ENCODE measurements at regions of chr1 and their contacts with region 1.

Region 1: GRCh38 chr1:160451119-160451858 is 50.9 kb downstream of the VANGL2 start:
- DNase-seq: no peak
- ATAC-seq: no peak
- H3K4me3 ChIP-seq: no peak overlapping the region
- H3K27ac ChIP-seq: no peak overlapping the region
- H3K4me1 ChIP-seq: no peaks in the 10 kb centered on the region
- H3K27me3 ChIP-seq: peaks cover 73% of the 10 kb centered on the region
- CTCF ChIP-seq: no peak

Region 2: GRCh38 chr1:159030877-159031447 is 1420.3 kb before region 1 on chr1:
- CTCF ChIA-PET with region 1: interaction called, 10 read pairs
- POLR2A ChIA-PET with region 1: no interaction called
- intact Hi-C with region 1: no loop called
- DNase-seq: no peak
- ATAC-seq: no peak
- H3K4me3 ChIP-seq: no peak overlapping the region
- H3K27ac ChIP-seq: no peak overlapping the region
- H3K4me1 ChIP-seq: no peaks in the 10 kb centered on the region
- H3K27me3 ChIP-seq: no peaks in the 10 kb centered on the region
- CTCF ChIP-seq: no peak

Region 3: DNA sequence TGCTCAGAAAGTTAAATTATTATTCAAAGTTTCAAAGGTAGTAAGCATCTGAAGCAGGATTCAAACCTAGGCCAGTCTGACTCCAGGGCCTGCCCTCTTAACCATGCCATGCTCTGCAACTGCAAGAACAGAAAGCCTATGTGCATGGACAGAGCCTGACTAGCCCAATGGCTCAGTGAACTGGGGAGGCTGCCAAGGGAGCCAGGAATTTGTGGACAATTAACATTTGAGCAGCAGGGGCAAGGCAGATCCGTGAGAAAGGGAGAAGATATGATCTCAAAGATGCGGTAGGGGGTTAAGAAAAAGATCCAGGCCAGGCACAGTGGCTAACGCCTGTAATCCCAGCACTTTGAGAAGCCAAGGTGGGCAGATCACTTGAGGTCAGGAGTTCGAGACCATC is 306.4 kb before region 1 on chr1:
- CTCF ChIA-PET with region 1: no interaction called
- POLR2A ChIA-PET with region 1: no interaction called
- intact Hi-C with region 1: no loop called
- DNase-seq: no peak
- ATAC-seq: no peak
- H3K4me3 ChIP-seq: no peak overlapping the region
- H3K27ac ChIP-seq: no peak overlapping the region
- H3K4me1 ChIP-seq: 0 out of 2 replicates have a peak, but pooled peaks cover 7% of the 10 kb centered on the region
- H3K27me3 ChIP-seq: peaks cover 13% of the 10 kb centered on the region; the same call in 1 of the 2 replicates
- CTCF ChIP-seq: no peak